ENCODE measurements at regions of chr22 and their contacts with region 1.

Region 1: GRCh38 chr22:41169157-41169556 is 36.0 kb upstream of the L3MBTL2 start:
- DNase-seq: no peak
- ATAC-seq: no peak
- H3K4me3 ChIP-seq: no peak overlapping the region
- H3K27ac ChIP-seq: no peak overlapping the region
- H3K4me1 ChIP-seq: no peaks in the 10 kb centered on the region
- H3K27me3 ChIP-seq: no peaks in the 10 kb centered on the region
- CTCF ChIP-seq: no peak
- POLR2A ChIP-seq: no peak
- RAD21 ChIP-seq: no peak

Region 2: GRCh38 chr22:41132550-41132949 is 36.6 kb before region 1 on chr22:
- CTCF ChIA-PET with region 1: no interaction called
- POLR2A ChIA-PET with region 1: no interaction called
- RAD21 ChIA-PET with region 1: no interaction called
- intact Hi-C with region 1: loop called (anchors 5 kb)
- DNase-seq: no peak
- ATAC-seq: no peak
- H3K4me3 ChIP-seq: no peak overlapping the region
- H3K27ac ChIP-seq: no peak overlapping the region
- H3K4me1 ChIP-seq: no peaks in the 10 kb centered on the region
- H3K27me3 ChIP-seq: no peaks in the 10 kb centered on the region
- CTCF ChIP-seq: no peak
- POLR2A ChIP-seq: no peak
- RAD21 ChIP-seq: no peak

Measured in HCT116 (cell line).